Activated naive CD4-positive, alpha-beta T cell treated with anti-CD3 and anti-CD28 coated beads for 36 hours (primary cell): ENCODE measurements at regions of chr7 and their contacts with region 1.

Region 1: GRCh38 chr7:41881331-41882130 is 178.6 kb upstream of the INHBA start:
- DNase-seq: peak; percentile 92
- H3K4me3 Mint-ChIP-seq: peak overlapping the region; percentile 19
- H3K27ac Mint-ChIP-seq: peak overlapping the region; percentile 98
- H3K4me1 Mint-ChIP-seq: peaks cover 53% of the 10 kb centered on the region
- H3K27me3 Mint-ChIP-seq: no peaks in the 10 kb centered on the region

Region 2: GRCh38 chr7:39948956-39949928 is 1932.3 kb before region 1 on chr7:
- CTCF ChIA-PET with region 1: no interaction called
- intact Hi-C with region 1: loop called (anchors 5 kb)
- DNase-seq: peak; percentile 99
- H3K4me3 Mint-ChIP-seq: peak overlapping the region; percentile 97
- H3K27ac Mint-ChIP-seq: peak overlapping the region; percentile 99
- H3K4me1 Mint-ChIP-seq: peaks cover 22% of the 10 kb centered on the region
- H3K27me3 Mint-ChIP-seq: no peaks in the 10 kb centered on the region

Region 3: DNA sequence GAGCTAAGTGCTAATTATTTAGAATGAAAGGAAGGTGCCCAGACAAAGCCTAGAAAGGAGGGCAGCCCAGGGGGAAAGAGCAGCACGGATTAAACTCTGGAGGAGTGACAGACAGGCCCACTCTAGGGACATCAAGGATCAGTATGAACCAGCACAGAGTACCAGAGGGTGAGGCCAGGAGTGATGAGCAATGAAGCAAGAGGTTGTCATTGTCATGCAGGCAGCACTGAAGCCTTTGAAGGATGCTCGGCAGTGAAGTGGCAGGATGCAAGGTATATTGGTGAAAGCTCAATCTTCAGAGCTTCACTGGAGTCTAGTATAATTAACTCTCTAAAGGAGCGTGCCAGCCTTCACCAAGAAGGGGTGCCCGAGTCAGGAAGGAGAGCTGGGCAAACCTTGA is 66.6 kb before region 1 on chr7:
- CTCF ChIA-PET with region 1: no interaction called
- intact Hi-C with region 1: loop called (anchors 2 kb)
- DNase-seq: no peak
- H3K4me3 Mint-ChIP-seq: no peak overlapping the region
- H3K27ac Mint-ChIP-seq: no peak overlapping the region
- H3K4me1 Mint-ChIP-seq: peaks cover 18% of the 10 kb centered on the region
- H3K27me3 Mint-ChIP-seq: peaks cover 15% of the 10 kb centered on the region

Region 4: DNA sequence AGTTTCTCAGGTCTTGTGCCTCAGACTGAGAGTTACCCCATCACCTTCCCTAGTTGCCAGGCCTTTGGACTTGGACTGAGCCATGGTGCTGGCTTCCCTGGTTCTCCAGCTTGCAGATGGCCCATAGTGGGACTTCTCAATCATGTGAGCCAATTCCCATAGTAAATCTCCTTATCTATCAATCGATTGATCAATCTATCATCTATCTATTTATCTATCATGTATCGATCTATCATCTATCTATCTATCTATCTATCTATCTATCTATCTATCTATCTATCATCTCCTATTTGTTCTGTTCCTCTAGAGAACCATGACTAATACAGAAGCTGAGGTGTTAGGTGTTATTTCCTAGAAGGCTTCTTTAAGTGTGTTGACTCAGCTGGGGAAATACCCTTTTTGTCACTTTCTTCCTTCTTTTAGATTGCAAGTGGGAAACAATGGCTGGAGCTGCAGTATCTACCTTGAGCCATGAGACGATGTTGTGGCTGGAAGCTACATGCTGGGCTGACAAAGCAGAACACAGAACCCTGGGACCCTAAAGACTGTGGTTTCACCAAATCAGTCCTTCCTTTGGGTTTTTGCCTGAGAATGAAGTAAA is 590.1 kb after region 1 on chr7:
- CTCF ChIA-PET with region 1: no interaction called
- intact Hi-C with region 1: loop called (anchors 1 kb)
- DNase-seq: peak; percentile 8
- H3K4me3 Mint-ChIP-seq: no peak overlapping the region
- H3K27ac Mint-ChIP-seq: no peak overlapping the region
- H3K4me1 Mint-ChIP-seq: no peaks in the 10 kb centered on the region
- H3K27me3 Mint-ChIP-seq: no peaks in the 10 kb centered on the region

Region 5: GRCh38 chr7:42931834-42932651 is 1050.5 kb after region 1 on chr7 and contains the starts of genes MRPL32 and PSMA2:
- CTCF ChIA-PET with region 1: no interaction called
- intact Hi-C with region 1: loop called (anchors 5 kb)
- DNase-seq: peak; percentile 95
- H3K4me3 Mint-ChIP-seq: peak within 1 kb of the TSS; percentile 100
- H3K27ac Mint-ChIP-seq: peak within 1 kb of the TSS; percentile 100
- H3K4me1 Mint-ChIP-seq: peaks cover 60% of the 10 kb centered on the region
- H3K27me3 Mint-ChIP-seq: no peaks in the 10 kb centered on the region
- total RNA-seq, gene MRPL32: 67.4 to 71.8 TPM
- total RNA-seq, gene PSMA2: 199 to 221 TPM

Region 6: GRCh38 chr7:43647673-43648472 is 1766.3 kb after region 1 on chr7:
- CTCF ChIA-PET with region 1: no interaction called
- intact Hi-C with region 1: loop called (anchors 5 kb)
- DNase-seq: peak; percentile 87
- H3K4me3 Mint-ChIP-seq: peak overlapping the region; percentile 62
- H3K27ac Mint-ChIP-seq: peak overlapping the region; percentile 98
- H3K4me1 Mint-ChIP-seq: peaks cover 94% of the 10 kb centered on the region
- H3K27me3 Mint-ChIP-seq: no peaks in the 10 kb centered on the region